ENCODE measurements at regions of chr1 and their contacts with region 1.

Region 1: DNA sequence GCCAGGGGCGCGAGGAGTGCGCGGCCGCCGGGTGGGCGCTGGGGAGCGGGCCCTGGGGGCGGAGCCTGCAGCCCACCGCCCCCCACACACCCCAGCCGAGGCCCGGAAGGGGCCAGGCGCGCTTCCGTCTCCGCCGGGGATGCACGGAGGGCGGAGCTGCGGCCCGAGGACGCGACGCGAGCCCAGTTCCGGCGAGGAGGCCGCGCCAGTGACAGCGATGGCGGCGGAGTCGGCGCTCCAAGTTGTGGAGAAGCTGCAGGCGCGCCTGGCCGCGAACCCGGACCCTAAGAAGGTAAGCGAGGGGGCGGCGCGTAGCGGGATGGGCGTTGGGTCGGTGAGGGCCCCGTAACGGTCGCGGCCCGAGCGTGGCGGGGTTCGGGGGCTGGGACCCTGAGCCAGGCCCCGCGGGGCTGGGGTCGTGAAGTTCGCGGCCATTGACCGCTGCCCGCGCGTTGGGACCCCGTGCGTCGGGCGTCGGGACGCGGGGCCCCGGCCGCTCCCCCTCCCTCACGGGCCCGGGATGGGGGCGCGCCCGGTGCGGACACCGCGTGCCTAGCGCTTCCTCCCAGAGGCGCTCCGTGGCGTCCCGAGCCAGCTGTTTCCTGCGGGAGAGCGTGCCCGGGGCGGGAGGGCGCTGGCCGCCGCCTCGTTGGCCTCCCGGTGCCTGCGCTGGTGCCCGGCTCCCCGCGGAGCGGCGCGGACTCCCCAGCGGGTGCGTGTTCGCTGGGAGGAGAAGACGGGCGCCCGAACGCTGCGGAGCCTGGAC is at the start of gene ELOA:
- DNase-seq: peak; percentile 84
- H3K4me3 ChIP-seq: peak within 1 kb of the TSS; percentile 90
- H3K27ac ChIP-seq: peak within 1 kb of the TSS; percentile 87
- H3K4me1 ChIP-seq: peaks cover 8% of the 10 kb centered on the region
- H3K27me3 ChIP-seq: no peaks in the 10 kb centered on the region
- CTCF ChIP-seq: no peak
- total RNA-seq, gene ELOA: 32.6 to 33.0 TPM

Region 2: DNA sequence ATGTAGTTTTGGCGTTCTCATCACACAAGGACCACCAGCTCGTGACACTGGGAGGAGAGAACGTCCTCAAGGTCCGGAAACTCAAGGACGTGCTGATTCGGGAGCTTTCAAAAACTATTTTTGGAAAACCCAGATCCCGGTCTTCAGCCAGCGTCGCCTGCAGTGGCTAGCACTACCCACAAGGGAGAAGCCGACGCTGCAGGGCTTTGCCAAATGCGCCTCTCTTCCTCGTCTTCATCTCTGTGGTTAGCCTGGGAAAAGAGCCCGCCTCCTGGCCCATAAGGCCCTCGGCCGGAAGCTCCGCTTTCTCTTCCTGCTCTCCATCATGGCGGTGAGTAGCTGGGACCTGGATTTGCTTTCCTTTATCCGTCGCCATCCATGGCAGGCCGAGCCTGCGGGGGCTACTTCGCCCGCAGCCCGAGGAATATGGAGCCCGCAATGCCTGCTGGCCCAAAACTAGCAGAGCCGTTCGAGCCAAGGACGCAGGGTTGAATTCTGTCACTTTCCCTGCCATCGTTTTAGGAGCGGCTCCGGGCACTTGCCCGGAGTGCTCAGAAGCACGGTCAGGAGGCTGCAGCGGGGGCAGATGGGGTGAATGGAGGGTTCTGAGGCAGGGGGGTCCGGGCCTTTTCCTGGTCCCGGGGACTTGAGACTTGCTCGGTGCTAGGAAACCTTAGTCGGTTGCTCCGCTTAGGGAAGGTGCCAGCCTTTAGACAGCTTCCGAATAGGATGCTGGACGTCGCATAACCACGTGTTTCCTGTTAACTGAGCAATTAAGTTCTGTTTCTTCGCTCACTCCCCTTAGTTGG is 51.8 kb before region 1 on chr1 and contains the start of gene RPL11:
- intact Hi-C with region 1: loop called (anchors 2 kb)
- DNase-seq: peak; percentile 93
- H3K4me3 ChIP-seq: peak within 1 kb of the TSS; percentile 70
- H3K27ac ChIP-seq: peak within 1 kb of the TSS; percentile 68
- H3K4me1 ChIP-seq: peaks cover 6% of the 10 kb centered on the region
- H3K27me3 ChIP-seq: no peaks in the 10 kb centered on the region
- CTCF ChIP-seq: peak; percentile 86
- total RNA-seq, gene RPL11: 871 to 897 TPM

Region 3: GRCh38 chr1:24003331-24003972 is 260.0 kb after region 1 on chr1:
- intact Hi-C with region 1: no loop called
- DNase-seq: no peak
- H3K4me3 ChIP-seq: no peak overlapping the region
- H3K27ac ChIP-seq: no peak overlapping the region
- H3K4me1 ChIP-seq: no peaks in the 10 kb centered on the region
- H3K27me3 ChIP-seq: no peaks in the 10 kb centered on the region
- CTCF ChIP-seq: no peak

Measured in colonic mucosa (tissue), 4 donors.